ENCODE measurements at regions of chr1 and their contacts with region 1.

Region 1: DNA sequence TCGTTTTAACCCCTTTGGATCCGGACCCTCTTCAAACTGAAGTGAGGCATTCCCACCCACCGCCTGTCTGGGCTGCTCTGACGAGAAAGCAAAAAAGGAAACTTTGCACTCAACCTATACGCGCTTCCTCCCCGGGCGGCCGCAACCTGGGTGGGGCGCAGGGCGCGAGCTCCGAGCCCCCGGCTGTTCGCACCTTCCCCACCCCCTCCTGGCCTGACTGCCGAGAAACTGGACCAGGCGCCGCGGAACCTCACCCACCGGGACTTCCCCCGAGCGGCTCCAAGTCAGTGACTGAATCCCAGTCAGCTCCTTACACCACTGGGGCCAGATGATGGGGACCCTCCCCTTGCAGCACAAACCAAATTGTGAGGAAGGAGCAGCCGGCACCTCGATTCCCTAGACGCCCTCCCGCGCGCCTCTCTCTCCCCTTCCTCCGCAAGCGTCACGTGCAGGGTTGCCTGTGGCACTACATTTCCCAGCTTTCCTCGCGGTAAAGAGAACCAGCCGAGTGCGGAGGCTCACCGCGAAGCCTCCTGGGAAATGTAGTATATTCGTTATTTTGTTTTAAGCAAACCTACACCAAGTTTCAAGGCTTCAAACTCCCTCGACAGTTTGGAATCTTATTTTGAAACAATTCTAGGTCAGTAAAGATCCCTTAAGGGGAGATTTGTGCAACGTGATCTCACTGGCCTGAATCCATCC is at the start of gene RAB29:
- DNase-seq: peak; percentile 83

Region 2: DNA sequence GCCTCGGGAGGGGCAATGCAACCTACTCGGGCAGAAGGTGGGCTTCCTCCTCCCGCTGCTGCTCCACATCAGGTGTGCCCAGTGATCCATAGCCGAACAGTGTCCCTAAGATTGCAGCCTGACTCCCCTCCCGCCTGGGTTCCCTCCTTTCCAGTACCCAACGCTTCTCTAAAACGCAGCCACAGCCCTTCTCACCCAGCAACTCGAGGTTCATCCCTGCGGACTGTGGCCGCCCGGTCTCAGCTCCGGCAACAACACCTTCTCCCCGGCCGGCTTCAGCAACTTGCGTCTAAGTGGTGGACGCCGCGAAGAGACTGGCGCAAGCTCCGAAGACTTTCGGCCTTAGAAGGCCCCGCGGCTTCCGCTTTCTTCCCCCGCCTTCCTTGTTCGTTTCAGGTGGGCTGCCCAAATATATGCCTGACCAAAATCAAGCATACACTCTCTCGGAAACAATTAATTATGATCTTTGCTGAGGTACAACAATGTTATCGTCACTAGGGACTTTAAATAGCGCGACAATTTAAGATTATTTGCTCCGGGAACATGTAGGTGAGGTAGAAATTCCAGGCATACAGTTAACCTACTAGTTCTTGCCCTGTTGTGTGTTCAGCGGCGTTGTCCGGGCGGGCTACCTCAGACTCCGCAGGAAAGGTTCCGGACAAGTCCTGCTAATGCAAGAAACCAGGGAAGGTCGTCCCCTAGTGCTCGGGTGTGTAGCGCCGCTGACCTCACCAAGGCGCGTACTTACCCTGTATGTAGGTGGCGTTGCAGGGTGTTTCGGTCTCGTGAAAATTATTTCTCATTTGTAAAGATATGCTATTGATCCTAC is 653.3 kb before region 1 on chr1 and contains the start of gene RBBP5:
- in situ Hi-C with region 1: no loop called
- DNase-seq: peak; percentile 97

Region 3: GRCh38 chr1:205568469-205569361 is 206.5 kb before region 1 on chr1:
- in situ Hi-C with region 1: no loop called
- DNase-seq: no peak

Region 4: DNA sequence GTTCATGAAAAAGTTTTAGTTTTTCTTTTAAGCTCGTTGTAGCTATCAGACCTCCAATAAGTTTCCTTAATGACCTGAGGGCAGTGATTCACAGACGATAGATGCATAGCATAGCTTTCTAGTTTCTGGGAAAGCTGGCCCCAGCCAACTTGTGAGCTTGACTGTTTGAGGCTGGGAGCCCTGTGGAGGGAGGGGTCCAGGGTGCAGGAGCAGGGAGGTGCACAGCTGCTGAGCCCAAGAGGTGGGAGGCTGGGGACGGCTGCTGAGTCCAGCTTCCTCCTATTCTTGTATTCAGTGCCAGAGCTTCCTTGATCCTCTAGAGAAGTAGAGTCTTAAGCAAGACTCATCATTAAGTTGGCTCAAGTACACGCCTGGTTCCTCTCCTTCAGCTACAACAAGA is 353.0 kb after region 1 on chr1:
- in situ Hi-C with region 1: loop called (anchors 25 kb)
- DNase-seq: peak; percentile 46